MCF 10A (cell line): ENCODE measurements at regions of chr12 and their contacts with region 1.

Region 1: GRCh38 chr12:25250744-25251730 is at the start of gene KRAS:
- DNase-seq: peak; percentile 96
- H3K4me3 Mint-ChIP-seq: peak within 1 kb of the TSS; percentile 82
- H3K27ac Mint-ChIP-seq: peak within 1 kb of the TSS; percentile 79
- H3K4me1 Mint-ChIP-seq: peaks cover 6% of the 10 kb centered on the region
- H3K27me3 Mint-ChIP-seq: no peaks in the 10 kb centered on the region
- CTCF ChIP-seq: no peak
- total RNA-seq, gene KRAS: 17.6 and 21.7 TPM in 2 replicates

Region 2: DNA sequence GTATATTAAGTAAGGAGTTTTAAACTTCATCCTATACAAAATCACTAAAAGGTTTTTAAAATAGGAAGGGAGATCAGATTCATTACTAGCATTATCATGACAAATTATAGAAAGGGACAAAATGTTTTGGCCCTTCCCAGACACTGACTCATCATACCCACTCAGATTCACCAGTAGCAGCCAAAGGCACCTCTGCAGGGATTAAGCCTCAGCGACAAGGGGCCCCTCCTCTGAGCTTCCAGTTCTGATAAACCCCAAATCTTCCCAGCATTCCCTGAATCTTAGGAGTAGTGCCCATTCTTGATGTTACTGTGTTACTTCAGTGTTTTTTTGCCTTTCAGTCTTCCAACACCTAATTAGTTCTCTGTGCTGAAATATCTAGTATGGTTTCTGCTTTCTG is 14.8 kb before region 1 on chr12:
- CTCF ChIA-PET with region 1: interaction called, 6 read pairs
- POLR2A ChIA-PET with region 1: interaction called, 18 read pairs
- intact Hi-C with region 1: no loop called
- DNase-seq: peak; percentile 30
- H3K4me3 Mint-ChIP-seq: no peak overlapping the region
- H3K27ac Mint-ChIP-seq: peak overlapping the region; percentile 4
- H3K4me1 Mint-ChIP-seq: peaks cover 16% of the 10 kb centered on the region
- H3K27me3 Mint-ChIP-seq: no peaks in the 10 kb centered on the region
- CTCF ChIP-seq: no peak

Region 3: DNA sequence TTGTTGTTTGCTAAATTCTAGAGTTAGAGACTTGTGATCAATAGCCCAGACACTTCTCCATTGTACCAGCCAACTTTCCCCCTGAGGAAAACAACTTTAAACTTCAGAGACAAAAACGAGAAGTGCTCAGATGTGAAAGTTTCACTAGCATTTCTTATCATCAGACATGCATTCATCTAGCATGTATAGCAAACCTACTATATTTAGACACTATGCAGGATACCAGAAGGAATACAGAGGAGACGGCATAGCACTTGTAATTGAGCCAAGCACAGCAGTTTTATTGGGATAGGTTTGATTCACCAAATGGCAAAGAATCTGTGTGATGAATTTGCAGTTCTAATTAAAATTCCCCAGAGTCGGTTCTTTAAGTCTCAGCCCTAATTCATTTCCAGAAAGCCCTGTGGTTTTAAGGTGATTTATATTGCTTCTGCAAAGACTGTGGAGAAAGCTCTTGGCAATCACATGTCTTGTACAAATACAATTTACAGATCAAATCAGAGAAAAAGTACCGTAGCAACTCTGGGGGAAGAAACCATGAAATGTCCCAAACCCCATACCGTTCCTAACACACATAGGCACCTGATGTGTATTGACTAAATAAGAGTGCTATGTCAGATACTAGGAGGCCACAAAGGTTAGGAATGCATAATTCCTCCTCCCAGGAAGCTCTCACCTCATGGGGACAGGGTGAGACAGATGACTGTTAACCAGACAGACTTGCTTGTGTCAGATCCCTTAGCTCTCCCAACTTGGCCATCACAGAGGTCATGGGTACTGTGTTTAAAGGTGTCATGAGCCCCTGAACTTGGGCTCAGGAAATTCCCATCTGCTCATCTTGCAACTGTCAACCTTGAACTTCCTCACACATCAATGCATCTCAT is 69.3 kb after region 1 on chr12:
- CTCF ChIA-PET with region 1: interaction called, 3 read pairs
- POLR2A ChIA-PET with region 1: interaction called, 5 read pairs
- intact Hi-C with region 1: loop called (anchors 5 kb)
- DNase-seq: no peak
- H3K4me3 Mint-ChIP-seq: no peak overlapping the region
- H3K27ac Mint-ChIP-seq: no peak overlapping the region
- H3K4me1 Mint-ChIP-seq: peaks cover 13% of the 10 kb centered on the region
- H3K27me3 Mint-ChIP-seq: no peaks in the 10 kb centered on the region
- CTCF ChIP-seq: no peak